HepG2 (cell line): ENCODE measurements at regions of chr14 and their contacts with region 1.

Region 1: GRCh38 chr14:51651388-51652167 is at the start of gene FRMD6:
- DNase-seq: peak; percentile 68
- ATAC-seq: peak; percentile 84
- H3K4me3 ChIP-seq: peak within 1 kb of the TSS; percentile 88 to 96 (median 93)
- H3K27ac ChIP-seq: peak within 1 kb of the TSS; percentile 85
- H3K4me1 ChIP-seq: peaks cover 36% of the 10 kb centered on the region
- H3K27me3 ChIP-seq: no peaks in the 10 kb centered on the region; a peak in 1 of 5 replicates
- CTCF ChIP-seq: peak; percentile 75
- EP300 ChIP-seq: no peak
- POLR2A ChIP-seq: peak; percentile 57 to 60; a peak in 3 of 4 replicates
- RAD21 ChIP-seq: peak; percentile 53
- total RNA-seq, gene FRMD6: 5.4 and 6.8 TPM in 2 replicates

Region 2: GRCh38 chr14:51283402-51284085 is 368.0 kb before region 1 on chr14:
- CTCF ChIA-PET with region 1: no interaction called
- POLR2A ChIA-PET with region 1: no interaction called
- in situ Hi-C with region 1: no loop called
- intact Hi-C with region 1: loop called (anchors 5 kb)
- DNase-seq: peak; percentile 74
- ATAC-seq: peak; percentile 77
- H3K4me3 ChIP-seq: no peak overlapping the region
- H3K27ac ChIP-seq: no peak overlapping the region
- H3K4me1 ChIP-seq: no peaks in the 10 kb centered on the region
- H3K27me3 ChIP-seq: no peaks in the 10 kb centered on the region
- CTCF ChIP-seq: peak; percentile 68
- EP300 ChIP-seq: no peak
- POLR2A ChIP-seq: no peak
- RAD21 ChIP-seq: peak; percentile 58; the same call in 1 of the 2 replicates

Region 3: GRCh38 chr14:51369814-51370213 is 281.8 kb before region 1 on chr14:
- CTCF ChIA-PET with region 1: no interaction called
- POLR2A ChIA-PET with region 1: no interaction called
- in situ Hi-C with region 1: no loop called
- intact Hi-C with region 1: loop called (anchors 5 kb)
- DNase-seq: no peak
- ATAC-seq: no peak
- H3K4me3 ChIP-seq: no peak overlapping the region
- H3K27ac ChIP-seq: no peak overlapping the region
- H3K4me1 ChIP-seq: no peaks in the 10 kb centered on the region; the same call in 1 of the 2 replicates
- H3K27me3 ChIP-seq: peaks cover 0 to 2% of the 10 kb centered on the region in 2 experiments; a peak in 2 of 5 replicates
- CTCF ChIP-seq: peak; percentile 50
- EP300 ChIP-seq: no peak
- POLR2A ChIP-seq: no peak
- RAD21 ChIP-seq: peak; percentile 9; the same call in 1 of the 2 replicates

Region 4: GRCh38 chr14:51534625-51535024 is 117.0 kb before region 1 on chr14:
- CTCF ChIA-PET with region 1: no interaction called
- POLR2A ChIA-PET with region 1: no interaction called
- in situ Hi-C with region 1: no loop called
- intact Hi-C with region 1: loop called (anchors 2 kb)
- DNase-seq: peak; percentile 95
- ATAC-seq: peak; percentile 99
- H3K4me3 ChIP-seq: no peak overlapping the region
- H3K27ac ChIP-seq: peak overlapping the region; percentile 41
- H3K4me1 ChIP-seq: peaks cover 31% of the 10 kb centered on the region
- H3K27me3 ChIP-seq: no peaks in the 10 kb centered on the region
- CTCF ChIP-seq: no peak
- EP300 ChIP-seq: peak in 1 of 2 experiments; percentile 91; a peak in 3 of 4 replicates
- POLR2A ChIP-seq: no peak
- RAD21 ChIP-seq: 0 out of 2 replicates have a peak, but pooled peaks have one; percentile 25

Region 5: DNA sequence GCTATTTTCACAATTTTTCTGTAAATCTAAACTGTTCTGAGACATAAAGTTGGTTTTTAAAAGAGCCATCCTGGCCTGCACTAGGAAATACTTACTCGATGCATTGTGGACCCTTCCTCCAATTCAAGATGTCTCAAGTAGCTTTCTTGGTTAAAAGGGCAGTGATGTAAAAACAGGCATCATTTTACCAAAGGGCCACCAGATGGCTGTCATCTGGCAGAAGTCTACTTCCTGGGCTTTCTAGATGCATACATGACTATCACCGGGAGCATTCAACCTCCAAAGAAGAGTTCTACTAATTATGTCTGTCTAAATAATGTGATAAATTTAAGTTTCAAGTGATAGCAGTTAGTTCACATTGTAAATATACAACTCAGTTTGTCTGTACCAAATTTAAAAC is 96.6 kb before region 1 on chr14:
- CTCF ChIA-PET with region 1: no interaction called
- POLR2A ChIA-PET with region 1: no interaction called
- in situ Hi-C with region 1: no loop called
- intact Hi-C with region 1: loop called (anchors 5 kb)
- DNase-seq: no peak
- ATAC-seq: no peak
- H3K4me3 ChIP-seq: no peak overlapping the region
- H3K27ac ChIP-seq: no peak overlapping the region
- H3K4me1 ChIP-seq: no peaks in the 10 kb centered on the region
- H3K27me3 ChIP-seq: 0 out of 5 replicates have a peak, but pooled peaks cover 0 to 5% of the 10 kb centered on the region in 2 experiments
- CTCF ChIP-seq: peak; percentile 47
- EP300 ChIP-seq: no peak
- POLR2A ChIP-seq: no peak
- RAD21 ChIP-seq: no peak

Region 6: DNA sequence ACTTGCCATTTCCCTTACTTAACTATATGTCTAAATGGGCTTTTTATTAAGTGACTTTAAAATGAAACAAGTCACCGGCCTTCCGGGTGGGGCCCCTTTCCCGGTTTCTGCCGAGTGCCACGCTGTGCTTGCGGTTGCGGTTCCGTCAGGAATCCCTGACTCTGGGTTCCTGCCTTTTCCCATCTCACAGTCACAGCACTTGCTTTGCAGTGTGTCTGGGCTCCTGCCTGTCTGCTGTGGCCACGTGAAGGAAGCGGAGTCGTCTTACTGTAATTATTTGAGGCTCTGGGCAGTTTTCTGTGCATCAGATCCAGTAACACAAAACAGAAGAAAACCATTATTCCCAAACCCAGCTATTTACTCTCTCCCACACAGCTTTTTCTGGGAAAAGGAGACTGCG is 43.9 kb before region 1 on chr14:
- CTCF ChIA-PET with region 1: no interaction called
- POLR2A ChIA-PET with region 1: no interaction called
- in situ Hi-C with region 1: no loop called
- intact Hi-C with region 1: no loop called
- DNase-seq: no peak
- ATAC-seq: no peak
- H3K4me3 ChIP-seq: no peak overlapping the region
- H3K27ac ChIP-seq: no peak overlapping the region
- H3K4me1 ChIP-seq: no peaks in the 10 kb centered on the region; the same call in 1 of the 2 replicates
- H3K27me3 ChIP-seq: no peaks in the 10 kb centered on the region; a peak in 1 of 5 replicates
- CTCF ChIP-seq: no peak
- EP300 ChIP-seq: no peak
- POLR2A ChIP-seq: no peak
- RAD21 ChIP-seq: no peak

Region 7: DNA sequence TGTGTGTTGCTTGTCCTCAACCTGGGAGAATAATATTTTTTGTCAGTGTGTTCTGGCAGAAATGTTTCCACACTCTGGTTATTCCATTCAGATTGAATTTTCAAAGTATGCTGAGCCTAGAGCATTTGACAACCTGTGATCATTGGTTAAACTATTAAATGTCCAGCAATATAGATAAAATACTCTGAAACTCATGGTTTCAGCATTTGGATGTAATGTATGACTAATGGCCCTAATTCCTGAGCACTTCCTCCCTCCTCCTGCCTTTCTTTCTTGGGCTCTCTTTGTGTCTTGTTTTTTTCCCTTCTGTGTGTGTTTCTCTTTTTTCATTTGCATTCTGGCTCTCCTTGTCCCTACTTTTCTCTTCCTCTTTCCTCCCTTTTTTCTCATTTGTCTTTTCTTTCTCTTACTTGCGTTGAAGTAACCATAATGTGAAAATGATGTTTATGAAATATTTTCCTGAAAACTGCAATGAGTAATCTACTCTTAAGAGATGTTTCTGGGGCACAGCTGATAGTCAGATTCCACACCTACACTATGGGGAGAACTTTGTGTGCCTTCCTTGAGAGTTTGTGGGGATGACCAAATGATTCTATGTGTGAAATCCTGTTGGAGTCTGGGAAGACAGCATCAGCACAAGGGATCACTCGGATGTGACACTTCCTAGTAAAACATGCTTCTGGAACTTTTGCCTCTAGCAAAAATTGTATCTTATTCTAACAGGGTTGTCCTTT is 74.8 kb after region 1 on chr14:
- CTCF ChIA-PET with region 1: no interaction called
- POLR2A ChIA-PET with region 1: no interaction called
- in situ Hi-C with region 1: no loop called
- intact Hi-C with region 1: no loop called
- DNase-seq: no peak
- ATAC-seq: no peak
- H3K4me3 ChIP-seq: no peak overlapping the region
- H3K27ac ChIP-seq: no peak overlapping the region
- H3K4me1 ChIP-seq: no peaks in the 10 kb centered on the region
- H3K27me3 ChIP-seq: no peaks in the 10 kb centered on the region
- CTCF ChIP-seq: no peak
- EP300 ChIP-seq: no peak
- POLR2A ChIP-seq: no peak
- RAD21 ChIP-seq: no peak